A549 (cell line): ENCODE measurements at regions of chr17 and their contacts with region 1.

Region 1: GRCh38 chr17:2331303-2331702 is 5.0 kb downstream of the TSR1 start:
- DNase-seq: peak in 1 of 2 experiments; percentile 36
- ATAC-seq: peak; percentile 11 to 36; a peak in 3 of 6 replicates
- H3K4me3 ChIP-seq: no peak overlapping the region
- H3K27ac ChIP-seq: no peak overlapping the region
- H3K4me1 ChIP-seq: peaks cover 15% of the 10 kb centered on the region
- CTCF ChIP-seq: no peak
- EP300 ChIP-seq: no peak
- POLR2A ChIP-seq: no peak
- RAD21 ChIP-seq: no peak

Region 2: DNA sequence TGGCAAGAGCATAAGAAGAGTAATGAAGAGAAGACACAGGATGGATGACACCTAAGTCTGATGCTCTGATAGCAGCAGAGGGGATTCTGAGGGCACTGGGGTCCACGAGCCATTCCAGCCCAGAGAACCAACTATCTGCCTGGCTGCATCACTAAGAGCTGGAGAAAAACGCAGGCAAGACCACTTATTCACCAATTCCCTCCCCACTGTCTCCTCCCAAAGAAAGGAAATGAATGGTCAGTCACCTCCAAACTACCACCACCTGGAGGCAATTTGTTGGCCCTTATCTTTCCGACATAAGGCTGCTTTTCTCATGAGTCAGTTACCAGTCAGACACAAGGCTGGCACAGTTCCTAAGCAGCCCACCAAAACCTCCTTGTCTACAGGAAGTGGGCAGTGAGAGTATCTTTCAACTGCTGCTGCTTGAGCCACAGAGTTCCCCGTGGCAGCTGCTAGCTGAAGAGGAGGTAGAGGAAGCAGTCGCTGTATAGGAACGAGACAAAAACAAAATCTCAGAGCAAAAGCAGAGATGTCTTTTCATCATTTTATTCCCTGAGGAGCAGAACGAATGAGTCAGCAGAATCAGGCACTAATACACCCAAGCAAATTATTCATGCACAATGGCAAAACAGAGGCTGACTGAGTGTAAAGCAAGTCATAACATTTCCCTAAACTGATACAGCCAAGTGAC is 138.8 kb before region 1 on chr17:
- CTCF ChIA-PET with region 1: no interaction called
- POLR2A ChIA-PET with region 1: no interaction called
- DNase-seq: peak; percentile 54 to 76
- ATAC-seq: peak; percentile 75 to 84
- H3K4me3 ChIP-seq: no peak overlapping the region
- H3K27ac ChIP-seq: peak overlapping the region; percentile 69 to 80
- H3K4me1 ChIP-seq: peaks cover 38% of the 10 kb centered on the region
- CTCF ChIP-seq: no peak
- EP300 ChIP-seq: no peak
- POLR2A ChIP-seq: no peak
- RAD21 ChIP-seq: no peak

Region 3: GRCh38 chr17:2309338-2310154 is 21.8 kb before region 1 on chr17:
- CTCF ChIA-PET with region 1: interaction called, 17 read pairs
- POLR2A ChIA-PET with region 1: interaction called, 37 read pairs
- DNase-seq: no peak
- ATAC-seq: peak in 1 of 2 experiments; percentile 64; a peak in 3 of 6 replicates
- H3K4me3 ChIP-seq: no peak overlapping the region
- H3K27ac ChIP-seq: no peak overlapping the region
- H3K4me1 ChIP-seq: peaks cover 5% of the 10 kb centered on the region; the same call in 1 of the 3 replicates
- CTCF ChIP-seq: no peak
- EP300 ChIP-seq: no peak
- POLR2A ChIP-seq: no peak
- RAD21 ChIP-seq: no peak

Region 4: GRCh38 chr17:2347547-2348307 is 16.4 kb after region 1 on chr17:
- CTCF ChIA-PET with region 1: interaction called, 79 read pairs
- POLR2A ChIA-PET with region 1: interaction called, 26 read pairs
- DNase-seq: peak; percentile 47 to 84
- ATAC-seq: peak; percentile 78 to 87
- H3K4me3 ChIP-seq: no peak overlapping the region
- H3K27ac ChIP-seq: peak overlapping the region; percentile 14 to 77; a peak in 4 of 6 replicates
- H3K4me1 ChIP-seq: peaks cover 14% of the 10 kb centered on the region
- CTCF ChIP-seq: no peak
- EP300 ChIP-seq: no peak
- POLR2A ChIP-seq: no peak
- RAD21 ChIP-seq: no peak

Region 5: GRCh38 chr17:2532146-2532720 is 200.9 kb after region 1 on chr17:
- CTCF ChIA-PET with region 1: no interaction called
- POLR2A ChIA-PET with region 1: no interaction called
- DNase-seq: no peak
- ATAC-seq: no peak
- H3K4me3 ChIP-seq: no peak overlapping the region
- H3K27ac ChIP-seq: no peak overlapping the region
- H3K4me1 ChIP-seq: peaks cover under 1% of the 10 kb centered on the region
- CTCF ChIP-seq: no peak
- EP300 ChIP-seq: no peak
- POLR2A ChIP-seq: no peak
- RAD21 ChIP-seq: no peak